ENCODE measurements at regions of chr1 and their contacts with region 1.

Region 1: DNA sequence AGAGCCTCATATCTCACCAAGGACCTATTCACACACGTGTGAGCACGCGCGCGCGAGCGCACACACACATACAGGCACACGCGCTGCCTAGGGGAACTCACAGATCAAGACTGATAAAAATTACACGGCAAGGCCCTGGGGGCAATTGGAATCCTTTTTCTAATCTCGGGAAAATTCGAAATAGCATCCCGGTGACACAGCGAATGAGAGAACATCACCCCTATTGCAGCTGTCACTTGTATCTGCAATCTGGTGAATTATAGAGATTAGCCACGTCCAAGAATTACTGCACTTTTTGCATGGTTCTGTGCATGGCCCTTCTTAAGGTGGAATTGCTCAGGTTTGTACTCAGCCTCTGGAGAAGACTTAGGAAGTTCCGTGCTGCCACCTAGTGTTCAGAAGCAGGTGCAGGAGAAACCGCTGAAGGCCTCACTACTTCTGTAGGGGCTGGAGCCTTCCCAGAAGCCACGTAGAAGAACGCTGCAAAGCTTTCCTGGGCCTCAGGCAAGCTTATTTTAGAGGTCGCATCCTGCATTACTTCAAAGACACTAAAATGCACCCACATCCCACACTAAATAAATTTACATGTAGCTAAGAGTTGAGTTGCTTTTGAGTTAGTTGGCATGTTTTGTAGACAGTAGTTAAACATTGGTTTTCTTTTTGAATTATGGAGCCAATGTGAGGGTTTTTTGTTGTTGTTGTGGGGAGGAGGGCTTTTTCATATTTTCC is 229.2 kb upstream of the CAMK1G start:
- DNase-seq: peak; percentile 71 to 85 (median 72)
- ATAC-seq: peak; percentile 100
- H3K4me3 ChIP-seq: no peak overlapping the region
- H3K27ac ChIP-seq: no peak overlapping the region
- H3K4me1 ChIP-seq: no peaks in the 10 kb centered on the region
- H3K27me3 ChIP-seq: no peaks in the 10 kb centered on the region
- CTCF ChIP-seq: peak; percentile 82 to 90 (median 88)
- EP300 ChIP-seq: no peak
- POLR2A ChIP-seq: no peak
- RAD21 ChIP-seq: peak; percentile 51 to 75

Region 2: DNA sequence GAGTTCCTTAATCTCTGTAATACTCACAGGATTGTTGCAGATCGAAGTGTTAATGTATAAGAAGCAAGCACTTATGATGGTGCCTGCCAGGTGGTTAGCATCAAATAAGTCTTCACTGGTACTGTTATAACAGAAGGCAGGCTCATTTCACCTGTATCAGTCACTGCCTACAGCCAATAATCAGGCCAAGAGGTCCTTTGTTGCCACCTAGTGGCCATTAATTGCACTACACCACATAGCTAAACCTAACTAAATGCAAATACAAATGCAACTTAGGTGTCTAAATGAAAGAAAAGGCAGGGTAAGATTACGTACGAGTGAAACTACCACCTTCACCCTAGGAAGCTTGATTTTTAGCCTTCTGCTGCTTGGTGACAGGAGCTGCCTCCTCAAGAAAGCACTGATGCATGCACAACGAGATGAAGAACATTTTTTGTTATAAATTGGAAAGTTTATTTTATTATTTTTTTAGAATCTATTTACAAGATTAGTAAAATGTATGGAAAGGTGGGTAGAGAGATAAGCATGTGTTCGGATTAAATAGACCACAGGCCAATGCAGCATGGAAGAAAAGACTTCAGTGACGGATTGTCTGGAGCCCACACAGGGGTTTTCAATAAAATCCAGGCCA is 105.5 kb before region 1 on chr1:
- CTCF ChIA-PET with region 1: interaction called, 9 read pairs
- POLR2A ChIA-PET with region 1: no interaction called
- in situ Hi-C with region 1: no loop called
- intact Hi-C with region 1: loop called (anchors 5 kb)
- DNase-seq: peak; percentile 68 to 73 (median 70)
- ATAC-seq: peak; percentile 93
- H3K4me3 ChIP-seq: no peak overlapping the region
- H3K27ac ChIP-seq: no peak overlapping the region
- H3K4me1 ChIP-seq: no peaks in the 10 kb centered on the region
- H3K27me3 ChIP-seq: no peaks in the 10 kb centered on the region
- CTCF ChIP-seq: peak; percentile 68 to 90 (median 85)
- EP300 ChIP-seq: no peak
- POLR2A ChIP-seq: no peak
- RAD21 ChIP-seq: peak; percentile 67 to 83

Region 3: DNA sequence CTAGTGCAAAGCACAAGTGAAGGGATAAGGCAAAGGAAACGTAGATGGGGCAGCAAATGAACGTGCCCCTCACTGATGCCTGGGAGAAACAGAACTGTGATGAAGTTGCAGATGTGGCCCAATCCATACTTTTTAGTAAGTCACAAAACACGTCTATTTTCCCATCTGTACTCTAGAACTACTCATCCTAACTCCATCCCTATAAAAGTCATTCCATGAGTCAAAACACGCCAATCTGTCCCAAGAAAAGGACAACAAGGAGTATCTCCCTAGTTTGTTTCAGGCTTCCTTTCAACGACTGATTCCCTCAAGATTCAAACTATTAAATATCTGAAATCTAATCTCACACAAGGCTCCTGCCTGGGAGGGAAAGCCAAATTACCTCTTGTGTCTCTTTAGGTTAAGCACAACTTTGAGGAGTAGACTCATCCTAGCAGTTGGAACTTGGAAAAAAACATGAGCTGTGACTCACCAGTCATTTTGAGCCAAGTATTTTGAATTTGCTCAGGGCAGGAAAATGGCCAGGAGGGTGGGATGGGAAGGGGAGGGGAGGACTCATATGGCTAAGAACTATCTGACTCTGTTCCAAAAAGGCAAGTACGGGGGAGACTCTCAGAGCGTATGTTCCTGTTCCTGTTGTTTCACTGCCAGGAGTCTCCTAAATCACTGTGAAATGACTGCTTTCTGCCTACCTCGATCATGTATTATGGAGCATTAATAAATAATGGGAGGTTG is 14.8 kb after region 1 on chr1:
- CTCF ChIA-PET with region 1: no interaction called
- POLR2A ChIA-PET with region 1: no interaction called
- in situ Hi-C with region 1: no loop called
- intact Hi-C with region 1: no loop called
- DNase-seq: no peak
- ATAC-seq: no peak
- H3K4me3 ChIP-seq: no peak overlapping the region
- H3K27ac ChIP-seq: no peak overlapping the region
- H3K4me1 ChIP-seq: no peaks in the 10 kb centered on the region
- H3K27me3 ChIP-seq: no peaks in the 10 kb centered on the region
- CTCF ChIP-seq: no peak
- EP300 ChIP-seq: no peak
- POLR2A ChIP-seq: no peak
- RAD21 ChIP-seq: no peak

Region 4: DNA sequence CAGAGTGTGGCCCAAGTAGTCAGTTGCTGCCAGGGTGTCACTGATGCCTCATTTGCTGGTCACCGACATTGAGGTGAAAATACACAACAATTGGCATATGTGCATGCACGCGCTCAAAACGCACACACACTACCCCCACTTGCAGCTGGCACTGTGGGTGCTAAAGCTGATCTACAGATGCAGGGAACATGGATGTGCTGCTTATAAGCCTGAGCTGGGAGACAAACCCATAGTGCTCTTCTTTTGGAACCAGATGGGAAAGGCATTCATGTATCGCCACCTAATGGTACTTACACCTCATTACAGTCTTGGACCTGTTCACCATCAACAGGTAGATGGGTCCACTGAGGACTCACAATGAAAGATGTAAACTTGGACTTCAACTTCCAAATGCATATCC is 159.0 kb after region 1 on chr1:
- CTCF ChIA-PET with region 1: no interaction called
- POLR2A ChIA-PET with region 1: no interaction called
- in situ Hi-C with region 1: no loop called
- intact Hi-C with region 1: loop called (anchors 5 kb)
- DNase-seq: peak; percentile 32 to 60 (median 42)
- ATAC-seq: peak; percentile 94
- H3K4me3 ChIP-seq: no peak overlapping the region
- H3K27ac ChIP-seq: no peak overlapping the region
- H3K4me1 ChIP-seq: no peaks in the 10 kb centered on the region
- H3K27me3 ChIP-seq: peaks cover 2 to 5% of the 10 kb centered on the region in 2 experiments; a peak in 1 of 5 replicates
- CTCF ChIP-seq: peak; percentile 65 to 79 (median 78)
- EP300 ChIP-seq: no peak
- POLR2A ChIP-seq: no peak
- RAD21 ChIP-seq: peak in 1 of 2 experiments; percentile 67; a peak in 2 of 4 replicates

Measured in K562 (cell line).